ENCODE measurements at regions of chr9 and their contacts with region 1.

Region 1: DNA sequence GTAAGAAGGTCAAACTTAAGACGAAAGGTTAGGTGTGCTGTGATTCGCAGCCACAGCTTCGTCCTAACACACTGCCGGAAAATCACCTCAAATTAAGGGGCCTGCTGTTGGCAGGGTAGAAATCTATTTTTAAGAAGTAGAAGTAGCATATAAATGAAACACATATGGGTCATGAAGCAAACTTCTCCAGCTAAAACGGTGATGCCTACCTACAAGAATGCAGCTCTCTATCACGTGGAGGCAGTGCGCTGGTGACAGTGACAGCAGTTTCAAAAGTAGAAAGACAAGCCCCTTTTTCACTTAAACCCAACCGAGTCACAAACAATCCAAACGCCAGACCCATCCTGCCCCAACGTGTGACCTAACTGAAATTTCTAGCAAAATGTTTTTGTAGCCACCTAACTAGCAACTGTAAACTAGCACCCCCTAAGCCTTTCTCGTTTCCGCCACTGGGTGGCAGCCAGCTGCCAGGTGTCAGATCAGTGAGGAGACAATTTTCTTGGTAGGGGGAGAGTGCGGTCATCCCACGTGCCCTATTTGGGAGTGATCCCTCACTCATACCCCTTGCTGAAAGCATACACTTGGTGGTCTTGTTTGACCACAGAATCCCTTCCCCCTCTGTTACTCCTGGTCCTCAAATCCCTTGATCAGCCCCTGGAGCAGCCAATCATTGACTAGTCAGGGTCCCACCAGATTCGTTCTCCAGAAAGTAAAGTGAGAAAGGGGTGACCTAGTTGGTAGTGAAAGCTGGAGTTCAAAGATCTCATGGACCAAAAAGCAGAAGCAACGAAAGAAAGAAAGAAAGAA is 71.8 kb upstream of the MAMDC2 start:
- DNase-seq: peak; percentile 49 to 74 (median 69)
- ATAC-seq: peak; percentile 84
- H3K4me3 ChIP-seq: no peak overlapping the region
- H3K27ac ChIP-seq: no peak overlapping the region
- H3K4me1 ChIP-seq: no peaks in the 10 kb centered on the region
- H3K27me3 ChIP-seq: no peaks in the 10 kb centered on the region
- CTCF ChIP-seq: peak; percentile 72 to 74

Region 2: GRCh38 chr9:69649566-69650250 is 322.1 kb before region 1 on chr9:
- intact Hi-C with region 1: no loop called
- DNase-seq: no peak
- ATAC-seq: no peak
- H3K4me3 ChIP-seq: no peak overlapping the region
- H3K27ac ChIP-seq: no peak overlapping the region
- H3K4me1 ChIP-seq: no peaks in the 10 kb centered on the region
- H3K27me3 ChIP-seq: no peaks in the 10 kb centered on the region
- CTCF ChIP-seq: no peak

Region 3: GRCh38 chr9:69905851-69906250 is 66.0 kb before region 1 on chr9:
- intact Hi-C with region 1: no loop called
- DNase-seq: no peak
- ATAC-seq: no peak
- H3K4me3 ChIP-seq: no peak overlapping the region
- H3K27ac ChIP-seq: no peak overlapping the region
- H3K4me1 ChIP-seq: no peaks in the 10 kb centered on the region
- H3K27me3 ChIP-seq: no peaks in the 10 kb centered on the region
- CTCF ChIP-seq: no peak

Region 4: DNA sequence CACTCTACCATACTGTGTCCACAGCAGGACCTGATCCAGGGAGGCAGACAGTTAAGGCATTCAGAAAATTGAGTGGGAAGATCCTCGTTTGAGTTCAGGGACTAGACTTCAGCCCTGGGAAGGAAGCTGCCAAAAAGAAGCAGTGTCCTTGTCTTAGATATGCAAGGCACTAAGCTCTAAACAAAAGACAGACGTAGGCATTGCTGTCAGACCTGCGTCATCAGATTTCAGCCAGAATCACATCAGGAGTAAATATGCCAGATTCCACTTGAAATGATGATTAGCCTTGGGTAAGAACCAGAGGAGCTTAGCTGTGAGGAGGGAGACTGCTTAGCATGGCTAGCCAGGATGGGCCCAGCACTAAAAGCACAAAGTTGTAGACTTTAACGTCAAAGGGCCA is 128.5 kb after region 1 on chr9:
- intact Hi-C with region 1: no loop called
- DNase-seq: no peak
- ATAC-seq: no peak
- H3K4me3 ChIP-seq: no peak overlapping the region
- H3K27ac ChIP-seq: no peak overlapping the region
- H3K4me1 ChIP-seq: no peaks in the 10 kb centered on the region
- H3K27me3 ChIP-seq: no peaks in the 10 kb centered on the region
- CTCF ChIP-seq: no peak

Region 5: DNA sequence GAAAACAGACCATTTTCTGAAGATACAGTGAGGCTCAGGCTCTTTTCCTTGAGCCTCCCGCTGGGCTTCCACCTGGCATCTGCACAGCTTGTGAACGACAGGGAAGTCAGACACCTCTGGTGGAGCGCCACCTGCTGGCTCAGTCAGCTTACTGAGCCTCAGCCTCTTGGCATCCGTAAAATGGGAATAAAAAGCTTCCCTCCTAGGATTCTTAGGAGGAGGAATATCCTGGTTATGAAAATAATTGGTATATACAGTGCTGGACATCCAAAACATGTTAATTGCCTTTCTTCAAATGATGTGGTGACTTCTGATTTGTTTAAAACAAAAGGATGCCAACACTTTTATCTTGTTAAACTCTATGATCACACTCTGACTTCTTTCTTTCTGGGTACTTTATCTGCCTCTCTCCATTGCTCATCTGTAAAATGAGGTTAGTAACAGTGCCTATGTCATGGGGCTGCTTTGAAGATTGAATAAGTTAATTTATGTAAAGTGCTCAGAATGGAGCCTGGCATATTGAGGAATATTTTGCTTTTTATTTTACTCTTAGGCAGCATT is 139.3 kb after region 1 on chr9:
- intact Hi-C with region 1: loop called in 1 of 2 experiments (anchors 5 kb)
- DNase-seq: peak; percentile 36 to 88 (median 73)
- ATAC-seq: peak; percentile 87
- H3K4me3 ChIP-seq: no peak overlapping the region
- H3K27ac ChIP-seq: no peak overlapping the region
- H3K4me1 ChIP-seq: no peaks in the 10 kb centered on the region
- H3K27me3 ChIP-seq: no peaks in the 10 kb centered on the region
- CTCF ChIP-seq: peak; percentile 80 to 83

Region 6: GRCh38 chr9:70609542-70610286 is 637.9 kb after region 1 on chr9:
- intact Hi-C with region 1: loop called in 1 of 2 experiments (anchors 10 kb)
- DNase-seq: peak in 2 of 4 donors; percentile 41 to 43
- ATAC-seq: peak; percentile 41
- H3K4me3 ChIP-seq: no peak overlapping the region
- H3K27ac ChIP-seq: no peak overlapping the region
- H3K4me1 ChIP-seq: peaks cover 0 to 10% of the 10 kb centered on the region in 2 donors
- H3K27me3 ChIP-seq: no peaks in the 10 kb centered on the region
- CTCF ChIP-seq: no peak

Measured in left lung (tissue), 14 donors.